CD4-positive, alpha-beta T cell (primary cell): ENCODE measurements at regions of chrX and their contacts with region 1.

Region 1: DNA sequence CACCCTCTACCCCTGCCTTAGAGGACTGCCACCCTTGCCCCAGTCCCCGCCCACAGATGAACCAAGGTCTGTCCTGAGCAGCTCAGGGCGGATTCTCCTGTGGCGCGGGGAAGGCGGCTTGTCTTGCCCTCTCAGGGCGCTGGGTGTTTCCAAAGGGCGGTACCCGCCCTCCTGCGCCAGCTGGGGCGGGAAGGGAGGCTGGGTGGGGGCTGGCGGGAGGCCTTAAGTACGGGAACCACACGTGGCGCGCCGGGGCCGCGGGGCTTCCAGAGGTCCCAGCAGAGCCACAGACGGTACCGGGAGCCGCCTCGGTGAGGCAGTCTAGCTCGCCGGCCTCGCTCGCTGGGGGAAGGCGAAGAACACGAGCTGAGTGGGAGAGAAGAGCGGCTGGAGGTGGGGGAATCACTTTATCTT is 361.1 kb downstream of the MID1IP1 start:
- DNase-seq: peak in 12 of 14 experiments; percentile 14 to 71 (median 36)
- ATAC-seq: peak; percentile 89
- H3K4me3 ChIP-seq: peak overlapping the region; percentile 28
- H3K4me3 Mint-ChIP-seq: peak overlapping the region; percentile 82
- H3K27ac ChIP-seq: no peak overlapping the region
- H3K27ac Mint-ChIP-seq: no peak overlapping the region
- H3K4me1 ChIP-seq: peaks cover 7% of the 10 kb centered on the region
- H3K4me1 Mint-ChIP-seq: peaks cover 5% of the 10 kb centered on the region
- H3K27me3 ChIP-seq: no peaks in the 10 kb centered on the region
- H3K27me3 Mint-ChIP-seq: no peaks in the 10 kb centered on the region
- CTCF ChIP-seq: peak; percentile 20

Region 2: DNA sequence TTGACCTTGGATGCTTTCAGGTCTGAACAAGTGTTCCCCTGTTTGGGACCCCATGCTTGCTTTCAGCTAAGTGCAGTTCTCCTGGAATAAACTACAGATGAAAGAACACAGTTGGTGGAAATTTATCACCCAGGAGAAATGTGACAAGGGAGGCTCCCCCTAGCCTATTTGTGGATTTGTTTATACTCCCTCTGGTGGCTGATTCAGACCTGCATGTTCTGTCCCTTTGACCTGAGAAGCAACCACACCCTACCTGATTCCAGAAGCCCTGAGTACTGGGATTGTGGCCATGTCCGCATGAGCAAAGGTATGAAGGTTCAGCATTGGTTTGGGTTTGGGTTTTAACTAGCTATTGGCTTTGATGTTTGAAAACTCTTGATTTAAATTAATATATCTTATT is 79.9 kb after region 1 on chrX:
- CTCF ChIA-PET with region 1: no interaction called
- POLR2A ChIA-PET with region 1: no interaction called
- intact Hi-C with region 1: loop called (anchors 1 to 10 kb)
- DNase-seq: peak in 5 of 14 experiments; percentile 3 to 58 (median 40)
- ATAC-seq: no peak
- H3K4me3 ChIP-seq: no peak overlapping the region
- H3K4me3 Mint-ChIP-seq: no peak overlapping the region
- H3K27ac ChIP-seq: no peak overlapping the region
- H3K27ac Mint-ChIP-seq: no peak overlapping the region
- H3K4me1 ChIP-seq: no peaks in the 10 kb centered on the region
- H3K4me1 Mint-ChIP-seq: no peaks in the 10 kb centered on the region
- H3K27me3 ChIP-seq: no peaks in the 10 kb centered on the region
- H3K27me3 Mint-ChIP-seq: no peaks in the 10 kb centered on the region
- CTCF ChIP-seq: peak; percentile 46

Region 3: GRCh38 chrX:39288592-39288991 is 126.3 kb after region 1 on chrX:
- CTCF ChIA-PET with region 1: no interaction called
- POLR2A ChIA-PET with region 1: no interaction called
- intact Hi-C with region 1: no loop called
- DNase-seq: no peak
- ATAC-seq: no peak
- H3K4me3 ChIP-seq: no peak overlapping the region
- H3K4me3 Mint-ChIP-seq: no peak overlapping the region
- H3K27ac ChIP-seq: no peak overlapping the region
- H3K27ac Mint-ChIP-seq: no peak overlapping the region
- H3K4me1 ChIP-seq: no peaks in the 10 kb centered on the region
- H3K4me1 Mint-ChIP-seq: no peaks in the 10 kb centered on the region
- H3K27me3 ChIP-seq: no peaks in the 10 kb centered on the region
- H3K27me3 Mint-ChIP-seq: no peaks in the 10 kb centered on the region
- CTCF ChIP-seq: no peak

Region 4: GRCh38 chrX:39487166-39487968 is 325.0 kb after region 1 on chrX:
- CTCF ChIA-PET with region 1: no interaction called
- POLR2A ChIA-PET with region 1: no interaction called
- intact Hi-C with region 1: no loop called
- DNase-seq: no peak
- ATAC-seq: no peak
- H3K4me3 ChIP-seq: no peak overlapping the region
- H3K4me3 Mint-ChIP-seq: no peak overlapping the region
- H3K27ac ChIP-seq: no peak overlapping the region
- H3K27ac Mint-ChIP-seq: no peak overlapping the region
- H3K4me1 ChIP-seq: peaks cover 20% of the 10 kb centered on the region
- H3K4me1 Mint-ChIP-seq: peaks cover 16% of the 10 kb centered on the region
- H3K27me3 ChIP-seq: no peaks in the 10 kb centered on the region
- H3K27me3 Mint-ChIP-seq: no peaks in the 10 kb centered on the region
- CTCF ChIP-seq: no peak